ENCODE measurements at regions of chr18 and their contacts with region 1.

Region 1: GRCh38 chr18:56575819-56576663 is 62.4 kb downstream of the TXNL1 start:
- DNase-seq: peak; percentile 15
- ATAC-seq: peak; percentile 74; the same call in 1 of the 2 replicates
- H3K4me3 ChIP-seq: no peak overlapping the region
- H3K27ac ChIP-seq: no peak overlapping the region
- H3K4me1 ChIP-seq: no peaks in the 10 kb centered on the region
- H3K27me3 ChIP-seq: no peaks in the 10 kb centered on the region
- CTCF ChIP-seq: peak; percentile 51; the same call in 1 of the 2 replicates

Region 2: DNA sequence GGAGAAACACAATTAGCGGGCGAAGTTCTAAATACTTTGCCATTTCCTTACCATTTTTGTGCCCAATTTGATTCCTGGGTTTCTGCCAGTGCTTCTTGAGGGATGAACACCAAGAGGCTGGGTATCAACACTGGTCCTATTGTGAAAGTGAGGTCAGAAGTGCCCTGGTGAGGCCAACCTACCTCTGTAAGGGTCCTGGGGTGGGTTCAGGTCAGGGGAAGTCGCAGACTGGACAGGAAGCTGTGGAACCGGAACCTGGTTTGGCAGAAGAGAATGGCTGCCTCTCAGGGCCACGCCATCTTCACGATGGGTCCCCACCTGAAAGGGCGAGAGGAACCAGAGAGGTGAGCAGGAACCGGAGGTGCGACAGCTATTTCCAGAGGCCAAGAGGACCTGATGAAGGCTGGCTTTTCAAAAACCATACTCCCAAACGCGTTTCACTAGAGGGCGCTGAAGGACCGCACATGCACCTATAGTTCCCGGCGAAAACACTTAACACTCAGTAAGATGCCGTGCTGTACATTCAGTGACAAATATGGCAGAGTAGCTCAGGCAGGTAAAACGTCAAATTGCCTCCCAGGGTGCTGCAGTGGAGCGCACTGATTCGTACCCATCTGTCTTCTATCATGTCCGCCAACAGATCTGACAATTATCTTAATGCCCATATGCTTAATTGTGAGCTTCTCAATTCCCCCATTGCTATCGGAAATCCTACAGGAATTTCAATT is 1341.5 kb before region 1 on chr18:
- CTCF ChIA-PET with region 1: interaction called, 3 read pairs
- POLR2A ChIA-PET with region 1: no interaction called
- in situ Hi-C with region 1: no loop called
- intact Hi-C with region 1: loop called (anchors 5 kb)
- DNase-seq: peak; percentile 61
- ATAC-seq: peak; percentile 91
- H3K4me3 ChIP-seq: no peak overlapping the region
- H3K27ac ChIP-seq: no peak overlapping the region
- H3K4me1 ChIP-seq: peaks cover 4% of the 10 kb centered on the region; the same call in 1 of the 2 replicates
- H3K27me3 ChIP-seq: no peaks in the 10 kb centered on the region
- CTCF ChIP-seq: peak; percentile 72

Region 3: GRCh38 chr18:55343396-55344073 is 1232.5 kb before region 1 on chr18:
- CTCF ChIA-PET with region 1: no interaction called
- POLR2A ChIA-PET with region 1: no interaction called
- in situ Hi-C with region 1: no loop called
- intact Hi-C with region 1: loop called (anchors 5 kb)
- DNase-seq: no peak
- ATAC-seq: no peak
- H3K4me3 ChIP-seq: no peak overlapping the region
- H3K27ac ChIP-seq: no peak overlapping the region
- H3K4me1 ChIP-seq: no peaks in the 10 kb centered on the region
- H3K27me3 ChIP-seq: no peaks in the 10 kb centered on the region
- CTCF ChIP-seq: peak; percentile 33; the same call in 1 of the 2 replicates

Region 4: DNA sequence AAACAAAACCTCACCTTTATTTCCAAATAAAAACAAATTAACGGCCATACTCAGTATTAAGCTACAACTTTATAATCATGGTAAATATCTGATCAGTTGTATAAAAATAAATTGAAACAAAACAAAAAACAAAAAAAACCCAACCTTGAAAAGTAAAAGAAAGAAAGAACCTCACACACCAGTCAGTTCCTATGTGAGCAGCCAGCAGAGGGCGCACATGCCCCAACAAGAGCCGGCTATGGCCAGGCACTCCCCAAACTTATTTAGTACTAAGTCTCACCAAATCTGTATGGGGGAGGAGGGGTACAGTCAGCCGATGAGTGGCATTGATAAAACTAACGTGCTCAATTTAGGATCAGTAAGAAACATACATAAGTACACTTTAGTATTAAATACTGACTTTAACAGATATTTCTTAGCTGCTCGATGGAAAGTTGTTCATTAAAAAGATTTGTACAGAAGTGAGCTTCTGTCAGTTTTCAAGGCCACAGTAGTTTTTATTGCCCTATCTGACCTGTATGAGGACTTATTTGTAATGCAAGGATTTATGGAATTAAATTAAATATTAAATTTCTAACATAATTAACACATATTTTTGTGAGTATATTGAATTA is 1160.7 kb before region 1 on chr18:
- CTCF ChIA-PET with region 1: no interaction called
- POLR2A ChIA-PET with region 1: no interaction called
- in situ Hi-C with region 1: no loop called
- intact Hi-C with region 1: loop called (anchors 10 kb)
- DNase-seq: peak; percentile 38
- ATAC-seq: peak; percentile 74; the same call in 1 of the 2 replicates
- H3K4me3 ChIP-seq: no peak overlapping the region
- H3K27ac ChIP-seq: no peak overlapping the region
- H3K4me1 ChIP-seq: no peaks in the 10 kb centered on the region
- H3K27me3 ChIP-seq: no peaks in the 10 kb centered on the region
- CTCF ChIP-seq: peak; percentile 78